ENCODE measurements at regions of chr5 and their contacts with region 1.

Region 1: DNA sequence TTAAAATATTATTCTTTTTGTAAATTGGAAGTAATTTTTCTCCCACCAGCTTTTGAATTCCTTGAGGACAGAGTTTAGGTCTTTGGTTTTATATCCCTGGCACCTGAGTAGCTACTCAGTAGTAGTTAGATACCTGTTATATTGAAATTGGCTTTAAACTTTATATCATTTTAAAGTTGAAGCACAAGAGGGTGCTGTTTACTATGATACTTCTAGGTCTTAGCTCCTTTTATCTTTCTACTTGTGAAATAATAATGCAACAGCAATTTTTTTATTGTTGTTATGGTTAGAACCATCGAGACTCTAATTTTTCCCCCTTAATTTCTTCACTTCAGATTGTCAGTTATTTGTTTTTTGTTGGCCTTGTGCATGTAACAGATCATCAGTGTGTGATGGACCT is 46.3 kb downstream of the AP3S1 start:
- DNase-seq: peak; percentile 54
- ATAC-seq: peak; percentile 46
- H3K4me3 ChIP-seq: no peak overlapping the region
- H3K27ac ChIP-seq: no peak overlapping the region
- H3K4me1 ChIP-seq: no peaks in the 10 kb centered on the region
- H3K27me3 ChIP-seq: no peaks in the 10 kb centered on the region
- CTCF ChIP-seq: peak; percentile 54
- POLR2A ChIP-seq: no peak
- RAD21 ChIP-seq: peak; percentile 60

Region 2: DNA sequence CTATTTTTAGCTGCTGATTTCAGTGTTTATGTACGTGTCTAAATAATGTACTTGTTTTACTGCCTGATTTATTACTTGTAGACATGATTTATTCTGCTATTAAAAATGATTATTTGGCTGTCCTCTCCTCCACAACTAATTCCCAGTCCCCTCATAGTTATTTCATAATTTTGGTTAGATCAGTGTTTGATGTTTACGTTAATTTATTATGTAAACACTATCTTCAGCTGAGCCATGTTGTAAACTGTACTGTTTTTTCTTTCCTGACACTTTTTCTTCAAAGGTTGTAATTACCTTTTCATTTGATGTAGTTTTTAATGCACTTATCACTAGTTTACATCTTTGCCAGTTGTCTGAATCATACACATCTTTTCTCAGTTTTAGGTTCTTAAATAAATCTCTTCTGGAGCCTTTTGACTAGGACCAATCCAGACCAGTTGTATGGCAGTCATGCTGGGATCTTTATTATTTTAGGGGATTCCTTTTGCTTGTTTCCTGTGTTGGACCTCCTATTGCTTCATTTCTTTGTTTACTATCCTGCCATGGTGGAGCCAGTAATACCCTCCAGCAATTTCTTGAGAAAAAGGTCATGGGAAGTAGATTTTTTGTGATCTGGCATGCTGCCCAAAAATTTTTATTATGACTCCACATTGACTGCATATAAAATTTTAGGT is 30.3 kb before region 1 on chr5:
- CTCF ChIA-PET with region 1: no interaction called
- POLR2A ChIA-PET with region 1: no interaction called
- dilution Hi-C with region 1: no loop called
- in situ Hi-C with region 1: no loop called
- intact Hi-C with region 1: no loop called
- DNase-seq: peak; percentile 35
- ATAC-seq: peak; percentile 59
- H3K4me3 ChIP-seq: no peak overlapping the region
- H3K27ac ChIP-seq: no peak overlapping the region
- H3K4me1 ChIP-seq: peaks cover 9% of the 10 kb centered on the region
- H3K27me3 ChIP-seq: no peaks in the 10 kb centered on the region
- CTCF ChIP-seq: no peak
- POLR2A ChIP-seq: no peak
- RAD21 ChIP-seq: no peak

Region 3: GRCh38 chr5:115968770-115969169 is 80.7 kb after region 1 on chr5:
- CTCF ChIA-PET with region 1: no interaction called
- POLR2A ChIA-PET with region 1: no interaction called
- dilution Hi-C with region 1: no loop called
- in situ Hi-C with region 1: no loop called
- intact Hi-C with region 1: no loop called
- DNase-seq: no peak
- ATAC-seq: no peak
- H3K4me3 ChIP-seq: no peak overlapping the region
- H3K27ac ChIP-seq: no peak overlapping the region
- H3K4me1 ChIP-seq: no peaks in the 10 kb centered on the region
- H3K27me3 ChIP-seq: peaks cover 6% of the 10 kb centered on the region
- CTCF ChIP-seq: no peak
- POLR2A ChIP-seq: no peak
- RAD21 ChIP-seq: no peak

Region 4: GRCh38 chr5:116032094-116032517 is 144.1 kb after region 1 on chr5 and contains the start of gene ARL14EPL:
- CTCF ChIA-PET with region 1: interaction called, 3 read pairs
- POLR2A ChIA-PET with region 1: no interaction called
- dilution Hi-C with region 1: no loop called
- in situ Hi-C with region 1: no loop called
- intact Hi-C with region 1: loop called (anchors 1 kb)
- DNase-seq: peak; percentile 92
- ATAC-seq: peak; percentile 98
- H3K4me3 ChIP-seq: no peak within 1 kb of the TSS
- H3K27ac ChIP-seq: no peak within 1 kb of the TSS
- H3K4me1 ChIP-seq: no peaks in the 10 kb centered on the region
- H3K27me3 ChIP-seq: no peaks in the 10 kb centered on the region
- CTCF ChIP-seq: peak; percentile 67
- POLR2A ChIP-seq: no peak
- RAD21 ChIP-seq: peak; percentile 70
- total RNA-seq, gene ARL14EPL: not detected in 2 replicates

Region 5: GRCh38 chr5:116068028-116068632 is 180.1 kb after region 1 on chr5:
- CTCF ChIA-PET with region 1: no interaction called
- POLR2A ChIA-PET with region 1: no interaction called
- dilution Hi-C with region 1: no loop called
- in situ Hi-C with region 1: loop called (anchors 5 kb)
- intact Hi-C with region 1: loop called (anchors 1 kb)
- DNase-seq: peak; percentile 72
- ATAC-seq: peak; percentile 66
- H3K4me3 ChIP-seq: no peak overlapping the region
- H3K27ac ChIP-seq: no peak overlapping the region
- H3K4me1 ChIP-seq: no peaks in the 10 kb centered on the region
- H3K27me3 ChIP-seq: peaks cover 3% of the 10 kb centered on the region; the same call in 1 of the 2 replicates
- CTCF ChIP-seq: peak; percentile 87
- POLR2A ChIP-seq: no peak
- RAD21 ChIP-seq: peak; percentile 82

Region 6: GRCh38 chr5:116475338-116475737 is 587.3 kb after region 1 on chr5:
- CTCF ChIA-PET with region 1: no interaction called
- POLR2A ChIA-PET with region 1: no interaction called
- dilution Hi-C with region 1: no loop called
- in situ Hi-C with region 1: no loop called
- intact Hi-C with region 1: no loop called
- DNase-seq: no peak
- ATAC-seq: no peak
- H3K4me3 ChIP-seq: no peak overlapping the region
- H3K27ac ChIP-seq: no peak overlapping the region
- H3K4me1 ChIP-seq: no peaks in the 10 kb centered on the region
- H3K27me3 ChIP-seq: no peaks in the 10 kb centered on the region
- CTCF ChIP-seq: no peak
- POLR2A ChIP-seq: no peak
- RAD21 ChIP-seq: no peak